Endothelial cell of umbilical vein (primary cell): ENCODE measurements at regions of chr11 and their contacts with region 1.

Region 1: GRCh38 chr11:112226062-112226830 is at the start of gene PTS:
- DNase-seq: peak; percentile 87
- H3K4me3 ChIP-seq: peak within 1 kb of the TSS; percentile 30 to 77 (median 73)
- H3K27ac ChIP-seq: peak within 1 kb of the TSS; percentile 96
- H3K4me1 ChIP-seq: peaks cover 14% of the 10 kb centered on the region
- H3K27me3 ChIP-seq: no peaks in the 10 kb centered on the region
- CTCF ChIP-seq: no peak
- POLR2A ChIP-seq: peak; percentile 96
- total RNA-seq, gene PTS: 41.9 and 45.7 TPM in 2 replicates

Region 2: DNA sequence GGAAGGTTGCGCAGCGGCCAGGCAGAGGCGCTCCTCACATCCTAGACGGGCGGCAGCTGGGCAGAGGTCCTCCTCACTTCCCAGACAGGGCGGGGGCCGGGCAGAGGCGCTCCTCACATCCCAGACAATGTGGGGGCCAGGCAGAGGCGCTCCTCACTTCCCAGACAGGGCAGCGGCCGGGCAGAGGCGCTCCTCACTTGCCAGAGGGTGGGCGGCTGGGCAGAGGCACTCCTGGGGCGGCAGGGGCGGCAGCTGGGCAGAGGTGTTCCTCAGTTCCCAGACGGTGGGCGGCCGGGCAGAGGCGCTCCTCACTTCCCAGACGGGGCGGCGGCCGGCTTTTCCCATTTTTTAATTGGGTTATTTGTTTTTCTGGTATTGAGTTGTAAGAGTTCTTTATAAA is 20.2 kb before region 1 on chr11:
- CTCF ChIA-PET with region 1: no interaction called
- POLR2A ChIA-PET with region 1: no interaction called
- dilution Hi-C with region 1: no loop called
- intact Hi-C with region 1: no loop called
- DNase-seq: no peak
- H3K4me3 ChIP-seq: no peak overlapping the region
- H3K27ac ChIP-seq: no peak overlapping the region
- H3K4me1 ChIP-seq: no peaks in the 10 kb centered on the region
- H3K27me3 ChIP-seq: no peaks in the 10 kb centered on the region
- CTCF ChIP-seq: no peak
- POLR2A ChIP-seq: no peak

Region 3: GRCh38 chr11:112255067-112255720 is 28.9 kb after region 1 on chr11:
- CTCF ChIA-PET with region 1: interaction called, 5 read pairs
- POLR2A ChIA-PET with region 1: no interaction called
- dilution Hi-C with region 1: no loop called
- intact Hi-C with region 1: loop called (anchors 1 kb)
- DNase-seq: peak; percentile 86
- H3K4me3 ChIP-seq: no peak overlapping the region
- H3K27ac ChIP-seq: peak overlapping the region; percentile 48
- H3K4me1 ChIP-seq: peaks cover 12% of the 10 kb centered on the region
- H3K27me3 ChIP-seq: no peaks in the 10 kb centered on the region
- CTCF ChIP-seq: no peak
- POLR2A ChIP-seq: no peak

Region 4: DNA sequence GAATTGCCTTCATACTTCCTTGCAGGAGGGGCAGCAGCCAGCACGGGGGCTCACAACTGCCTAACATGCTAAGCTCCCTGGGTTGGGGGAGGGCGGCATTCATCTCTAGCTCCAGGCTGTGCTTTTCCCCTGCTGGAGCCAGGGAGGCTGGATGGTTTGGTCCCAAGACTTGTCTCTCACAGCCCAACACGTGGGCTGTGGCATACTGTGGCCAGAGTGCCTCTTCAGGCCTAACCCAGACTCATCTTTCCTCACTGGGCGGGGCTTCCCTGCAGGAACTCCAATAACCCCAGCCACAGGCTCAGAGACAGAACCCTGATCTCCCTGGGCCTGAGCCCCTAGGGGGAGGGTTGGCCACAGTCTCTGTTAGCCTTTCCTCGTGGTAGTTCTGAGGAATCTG is 156.3 kb after region 1 on chr11:
- CTCF ChIA-PET with region 1: no interaction called
- POLR2A ChIA-PET with region 1: no interaction called
- dilution Hi-C with region 1: no loop called
- intact Hi-C with region 1: no loop called
- DNase-seq: no peak
- H3K4me3 ChIP-seq: no peak overlapping the region
- H3K27ac ChIP-seq: no peak overlapping the region
- H3K4me1 ChIP-seq: no peaks in the 10 kb centered on the region
- H3K27me3 ChIP-seq: no peaks in the 10 kb centered on the region
- CTCF ChIP-seq: no peak
- POLR2A ChIP-seq: no peak